ENCODE measurements at regions of chr3 and their contacts with region 1.

Region 1: GRCh38 chr3:57227204-57227929 is at the start of gene APPL1:
- DNase-seq: peak; percentile 92
- H3K4me3 Mint-ChIP-seq: peak within 1 kb of the TSS; percentile 93
- H3K27ac Mint-ChIP-seq: peak within 1 kb of the TSS; percentile 82
- H3K4me1 Mint-ChIP-seq: peaks cover 42% of the 10 kb centered on the region
- H3K27me3 Mint-ChIP-seq: peaks cover 8% of the 10 kb centered on the region
- total RNA-seq, gene APPL1: 39.9 and 46.0 TPM in 2 replicates

Region 2: GRCh38 chr3:56556908-56557830 is 670.2 kb before region 1 on chr3 and contains the start of gene CCDC66:
- intact Hi-C with region 1: loop called (anchors 2 kb)
- DNase-seq: peak; percentile 90
- H3K4me3 Mint-ChIP-seq: peak within 1 kb of the TSS; percentile 97
- H3K27ac Mint-ChIP-seq: peak within 1 kb of the TSS; percentile 99
- H3K4me1 Mint-ChIP-seq: peaks cover 38% of the 10 kb centered on the region
- H3K27me3 Mint-ChIP-seq: peaks cover 23% of the 10 kb centered on the region
- total RNA-seq, gene CCDC66: 37.7 and 40.4 TPM in 2 replicates

Region 3: DNA sequence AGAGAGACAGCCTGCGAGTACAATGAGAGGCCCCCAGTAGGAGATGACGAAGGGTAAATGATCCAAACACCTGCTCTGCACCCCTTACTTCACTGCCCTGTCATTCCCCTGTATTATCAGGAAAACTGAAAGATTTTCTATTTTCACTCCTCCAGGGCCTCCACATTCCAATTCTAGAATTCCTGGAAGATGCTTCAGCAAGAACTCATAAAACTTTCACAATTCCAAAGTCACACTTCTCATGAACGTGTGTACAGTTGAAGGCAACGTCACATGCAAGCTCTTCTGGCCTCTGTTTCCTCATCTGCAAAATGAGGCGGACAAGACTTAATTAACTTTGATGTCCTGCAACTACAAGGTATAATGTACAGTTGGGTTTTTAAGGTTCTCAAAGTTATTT is 229.7 kb before region 1 on chr3:
- intact Hi-C with region 1: loop called (anchors 10 kb)
- DNase-seq: no peak
- H3K4me3 Mint-ChIP-seq: no peak overlapping the region
- H3K27ac Mint-ChIP-seq: no peak overlapping the region
- H3K4me1 Mint-ChIP-seq: peaks cover 5% of the 10 kb centered on the region
- H3K27me3 Mint-ChIP-seq: peaks cover 3% of the 10 kb centered on the region

Region 4: DNA sequence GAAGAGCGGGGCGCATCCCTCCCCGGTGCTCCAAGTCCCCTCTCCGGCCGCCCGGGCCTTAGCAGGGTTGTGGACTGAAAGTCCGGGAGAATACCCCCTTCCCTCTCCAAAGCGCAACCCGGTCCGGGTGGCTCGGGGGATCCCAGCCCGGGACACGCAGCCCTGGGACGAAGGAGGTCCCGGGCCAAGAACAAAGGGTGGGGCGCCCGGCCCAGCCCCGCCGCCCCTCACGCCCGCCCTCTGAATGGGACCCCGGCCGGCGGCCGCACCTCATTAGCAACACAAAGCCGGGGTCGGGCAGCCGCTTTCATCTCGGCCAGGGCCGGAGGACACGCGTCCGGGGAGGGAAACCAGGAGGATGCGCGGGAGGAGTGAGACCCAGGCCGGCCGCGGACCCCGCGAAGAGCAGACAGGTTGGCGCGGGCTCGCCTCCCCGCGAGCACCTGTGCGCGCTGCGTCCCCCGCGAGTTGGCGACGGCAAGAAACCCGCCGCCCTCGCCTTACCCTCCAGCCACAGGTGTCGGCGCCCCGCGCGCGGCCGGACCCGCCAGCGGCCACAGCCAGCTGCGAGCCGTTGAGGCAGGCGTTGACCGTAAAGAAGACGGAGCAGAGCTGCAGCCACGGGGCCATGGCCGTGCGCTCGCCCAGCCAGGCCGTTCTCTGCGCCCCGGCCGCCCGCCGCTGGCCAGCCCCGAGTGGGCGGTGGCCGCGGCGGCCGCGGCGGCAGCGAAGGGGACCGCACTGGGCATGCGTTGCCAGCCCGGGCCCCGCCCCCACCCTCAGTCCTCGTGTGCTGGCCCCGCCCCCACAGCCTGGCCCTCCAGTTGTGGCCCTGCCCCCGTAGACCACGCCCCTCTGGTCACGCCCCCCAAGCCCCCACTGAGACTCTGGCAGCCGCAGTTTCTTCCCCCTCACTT is 62.5 kb before region 1 on chr3 and contains the start of gene IL17RD:
- intact Hi-C with region 1: loop called (anchors 2 kb)
- DNase-seq: peak; percentile 22
- H3K4me3 Mint-ChIP-seq: peak within 1 kb of the TSS; percentile 86
- H3K27ac Mint-ChIP-seq: no peak within 1 kb of the TSS
- H3K4me1 Mint-ChIP-seq: peaks cover 8% of the 10 kb centered on the region
- H3K27me3 Mint-ChIP-seq: peaks cover 76% of the 10 kb centered on the region
- total RNA-seq, gene IL17RD: 0.15 TPM in 1 of 2 replicates, not detected in the other

Region 5: GRCh38 chr3:57268416-57268815 is 41.0 kb after region 1 on chr3:
- intact Hi-C with region 1: no loop called
- DNase-seq: no peak
- H3K4me3 Mint-ChIP-seq: no peak overlapping the region
- H3K27ac Mint-ChIP-seq: no peak overlapping the region
- H3K4me1 Mint-ChIP-seq: no peaks in the 10 kb centered on the region
- H3K27me3 Mint-ChIP-seq: no peaks in the 10 kb centered on the region

Region 6: DNA sequence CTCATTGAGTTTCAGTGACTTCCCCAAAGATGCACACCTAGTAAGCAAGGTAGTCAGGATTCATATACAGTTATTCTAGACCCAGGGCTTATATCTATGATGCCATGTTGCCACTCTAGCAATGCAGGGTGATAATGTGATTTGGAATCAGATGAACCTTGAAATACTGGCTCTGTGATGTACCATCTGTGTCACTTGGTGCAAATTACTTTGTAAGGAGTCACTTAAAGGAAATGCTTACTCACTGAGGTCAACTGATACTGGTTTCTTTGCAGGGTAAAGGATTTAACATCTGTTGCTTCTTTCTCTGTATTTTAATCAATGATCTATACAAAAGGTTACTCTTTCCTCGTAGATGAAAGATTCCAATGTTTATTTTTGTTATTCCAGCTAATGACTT is 54.3 kb after region 1 on chr3:
- intact Hi-C with region 1: no loop called
- DNase-seq: no peak
- H3K4me3 Mint-ChIP-seq: no peak overlapping the region
- H3K27ac Mint-ChIP-seq: no peak overlapping the region
- H3K4me1 Mint-ChIP-seq: no peaks in the 10 kb centered on the region
- H3K27me3 Mint-ChIP-seq: peaks cover 3% of the 10 kb centered on the region

Region 7: GRCh38 chr3:57555738-57556458 is 328.5 kb after region 1 on chr3 and contains the start of gene PDE12:
- intact Hi-C with region 1: loop called (anchors 2 kb)
- DNase-seq: peak; percentile 78
- H3K4me3 Mint-ChIP-seq: peak within 1 kb of the TSS; percentile 100
- H3K27ac Mint-ChIP-seq: peak within 1 kb of the TSS; percentile 100
- H3K4me1 Mint-ChIP-seq: peaks cover 47% of the 10 kb centered on the region
- H3K27me3 Mint-ChIP-seq: no peaks in the 10 kb centered on the region
- total RNA-seq, gene PDE12: 34.7 and 34.9 TPM in 2 replicates

Region 8: DNA sequence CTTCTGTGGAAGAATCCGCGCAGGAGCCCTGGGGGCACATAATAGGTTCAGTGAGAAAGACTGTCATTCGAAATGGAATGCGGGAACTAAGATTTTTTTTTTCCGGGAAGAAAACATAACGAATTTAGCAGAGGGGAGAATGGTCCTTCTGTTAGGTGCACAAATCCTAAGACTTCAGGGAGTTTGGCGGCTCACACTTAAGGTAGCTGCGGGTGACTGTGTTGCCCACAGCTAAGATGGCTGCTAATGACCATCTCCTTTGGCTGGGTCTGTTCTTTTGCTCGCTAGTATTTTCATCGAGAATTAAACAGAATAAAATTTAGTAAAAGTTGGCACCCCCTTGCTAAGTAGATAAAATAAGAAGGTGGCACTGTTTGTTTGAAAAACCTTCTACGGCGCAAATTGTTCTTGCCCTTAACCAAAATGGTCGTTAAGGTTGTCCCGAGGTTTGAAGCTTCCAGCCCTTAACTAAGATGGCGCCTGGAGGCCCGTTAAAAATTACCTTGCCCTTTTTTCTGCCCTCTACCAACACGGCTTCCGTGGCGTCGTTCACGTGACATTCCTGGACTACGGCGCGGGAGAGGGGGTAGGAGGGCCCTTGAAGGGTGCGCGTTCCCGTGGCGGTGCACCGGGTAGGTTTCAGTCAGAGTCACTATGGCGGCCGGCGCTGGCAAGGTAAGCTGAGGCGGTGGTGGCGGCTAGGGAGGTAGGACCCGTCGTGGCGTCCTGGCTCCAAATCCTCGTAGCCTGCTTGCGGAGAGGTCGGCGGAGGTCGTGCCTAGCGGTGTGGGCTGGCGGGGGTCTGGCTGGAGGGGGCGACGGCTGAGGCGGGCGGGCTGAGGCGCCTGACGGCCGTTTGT is 528.5 kb after region 1 on chr3 and contains the start of gene SLMAP:
- intact Hi-C with region 1: loop called (anchors 1 kb)
- DNase-seq: peak; percentile 95
- H3K4me3 Mint-ChIP-seq: peak within 1 kb of the TSS; percentile 98
- H3K27ac Mint-ChIP-seq: peak within 1 kb of the TSS; percentile 97
- H3K4me1 Mint-ChIP-seq: peaks cover 39% of the 10 kb centered on the region
- H3K27me3 Mint-ChIP-seq: peaks cover 6% of the 10 kb centered on the region
- total RNA-seq, gene SLMAP: 60.3 and 64.0 TPM in 2 replicates